ENCODE measurements at regions of chr14 and their contacts with region 1.

Region 1: DNA sequence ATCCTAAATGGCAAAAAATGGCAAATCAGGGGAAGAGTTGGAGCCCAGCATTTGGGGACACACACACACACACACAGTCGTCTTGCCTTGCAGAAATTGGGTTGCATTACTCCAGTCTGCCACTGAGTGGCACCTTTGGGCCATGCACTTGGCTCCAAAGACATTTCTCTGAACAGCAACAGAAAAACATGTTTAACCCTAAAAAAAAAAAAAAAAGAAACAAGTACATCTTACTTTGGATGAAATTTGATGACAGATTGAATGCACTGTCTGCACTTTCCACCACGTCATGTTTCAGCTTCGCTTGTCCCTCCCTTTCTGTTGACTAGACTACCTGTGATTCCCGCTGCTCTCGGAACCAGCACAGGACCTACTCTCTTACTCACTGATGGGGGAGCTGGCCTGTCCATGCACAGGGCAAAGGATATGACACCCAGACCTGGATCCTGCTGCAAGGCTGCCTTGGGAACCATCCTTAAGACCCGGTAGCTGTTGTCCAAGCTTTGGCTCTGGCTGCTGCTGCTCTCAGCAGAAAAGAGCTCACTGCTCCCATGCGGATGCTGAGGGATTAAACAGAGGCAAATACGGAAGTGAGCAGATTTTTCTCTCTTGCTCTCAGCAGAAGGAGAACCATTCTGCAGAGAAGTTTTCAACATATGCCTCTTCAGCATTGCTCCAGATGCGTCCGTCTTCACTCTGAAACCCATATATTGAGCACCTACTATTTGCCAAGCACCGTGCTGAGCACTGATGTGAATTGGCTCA is 376.8 kb downstream of the DPF3 start:
- H3K4me3 ChIP-seq: no peak overlapping the region
- H3K27ac ChIP-seq: no peak overlapping the region
- H3K4me1 ChIP-seq: no peaks in the 10 kb centered on the region
- CTCF ChIP-seq: peak; percentile 65

Region 2: DNA sequence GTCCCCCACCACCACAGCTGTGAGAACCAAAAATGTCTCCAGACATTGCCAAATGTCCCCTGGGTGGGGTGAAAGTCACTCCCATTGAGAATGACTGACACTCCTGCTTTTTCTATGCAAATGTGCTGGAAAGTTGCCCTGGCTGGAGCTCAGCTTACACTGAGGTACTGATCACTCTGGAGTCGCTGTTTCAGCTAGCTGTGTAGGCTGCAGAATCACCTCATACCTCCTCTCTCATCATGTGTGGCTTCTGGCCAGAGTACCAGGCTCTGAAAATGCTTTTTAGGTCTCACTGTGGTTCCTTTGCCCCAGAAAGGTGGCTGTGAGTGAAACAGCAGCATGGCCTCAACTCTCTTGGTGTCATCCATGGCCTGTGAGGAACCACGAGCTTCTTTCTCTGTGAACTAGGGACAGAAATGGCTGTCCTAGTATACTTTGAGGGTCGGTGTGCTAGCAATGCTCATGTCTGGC is 37.6 kb before region 1 on chr14:
- CTCF ChIA-PET with region 1: no interaction called
- POLR2A ChIA-PET with region 1: no interaction called
- H3K4me3 ChIP-seq: no peak overlapping the region
- H3K27ac ChIP-seq: no peak overlapping the region
- H3K4me1 ChIP-seq: peaks cover 5% of the 10 kb centered on the region
- CTCF ChIP-seq: no peak

Region 3: GRCh38 chr14:72503696-72504368 is 13.3 kb before region 1 on chr14:
- CTCF ChIA-PET with region 1: interaction called, 10 read pairs
- POLR2A ChIA-PET with region 1: no interaction called
- H3K4me3 ChIP-seq: no peak overlapping the region
- H3K27ac ChIP-seq: no peak overlapping the region
- H3K4me1 ChIP-seq: no peaks in the 10 kb centered on the region; the same call in 1 of the 2 replicates
- CTCF ChIP-seq: no peak

Region 4: DNA sequence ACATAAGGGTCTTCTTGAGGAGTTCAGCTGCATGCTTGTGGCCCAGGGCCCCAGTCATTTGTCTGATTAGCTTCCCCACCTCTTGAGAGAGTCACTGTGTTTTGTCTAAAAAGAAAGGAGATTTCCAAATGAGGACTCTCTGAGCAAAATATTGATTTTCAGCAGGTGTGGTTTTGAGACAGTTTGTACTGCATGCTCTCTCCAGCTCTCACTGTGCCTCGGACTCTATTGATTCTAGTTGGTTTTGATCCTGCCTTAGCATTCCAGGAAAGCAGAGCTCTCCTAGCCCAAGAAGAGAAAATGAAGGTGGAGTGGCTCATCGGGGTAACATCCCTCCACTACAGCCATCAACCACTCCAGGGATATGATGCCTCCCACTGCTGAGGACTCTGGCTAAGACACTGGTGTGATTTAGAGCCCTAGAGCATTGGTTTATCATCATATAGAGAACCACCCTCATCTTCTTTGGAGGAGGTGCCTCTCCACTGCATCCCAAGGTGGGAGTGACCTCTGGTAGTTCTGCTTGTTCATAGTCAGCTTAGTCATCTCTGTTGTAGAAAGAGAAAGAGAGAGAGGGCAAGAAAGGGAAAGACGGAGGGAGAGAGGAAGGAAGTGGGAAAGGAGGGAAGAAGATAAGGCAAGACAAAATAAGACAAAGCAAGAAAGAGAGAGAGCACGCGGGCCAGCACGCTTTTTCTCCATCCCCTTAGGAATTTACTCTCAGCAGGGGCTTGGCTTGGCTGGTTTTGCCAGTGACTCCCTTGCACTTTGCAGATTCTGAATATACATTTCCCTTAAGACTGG is 11.1 kb after region 1 on chr14:
- CTCF ChIA-PET with region 1: interaction called, 17 read pairs
- POLR2A ChIA-PET with region 1: no interaction called
- H3K4me3 ChIP-seq: no peak overlapping the region
- H3K27ac ChIP-seq: no peak overlapping the region
- H3K4me1 ChIP-seq: no peaks in the 10 kb centered on the region
- CTCF ChIP-seq: no peak

Region 5: GRCh38 chr14:72893636-72894321 is 376.7 kb after region 1 on chr14 and contains the start of gene DPF3:
- CTCF ChIA-PET with region 1: interaction called, 12 read pairs
- POLR2A ChIA-PET with region 1: interaction called, 4 read pairs
- H3K4me3 ChIP-seq: peak within 1 kb of the TSS; percentile 81
- H3K27ac ChIP-seq: peak within 1 kb of the TSS; percentile 48; the same call in 1 of the 2 replicates
- H3K4me1 ChIP-seq: 0 out of 2 replicates have a peak, but pooled peaks cover 5% of the 10 kb centered on the region
- CTCF ChIP-seq: no peak

Region 6: DNA sequence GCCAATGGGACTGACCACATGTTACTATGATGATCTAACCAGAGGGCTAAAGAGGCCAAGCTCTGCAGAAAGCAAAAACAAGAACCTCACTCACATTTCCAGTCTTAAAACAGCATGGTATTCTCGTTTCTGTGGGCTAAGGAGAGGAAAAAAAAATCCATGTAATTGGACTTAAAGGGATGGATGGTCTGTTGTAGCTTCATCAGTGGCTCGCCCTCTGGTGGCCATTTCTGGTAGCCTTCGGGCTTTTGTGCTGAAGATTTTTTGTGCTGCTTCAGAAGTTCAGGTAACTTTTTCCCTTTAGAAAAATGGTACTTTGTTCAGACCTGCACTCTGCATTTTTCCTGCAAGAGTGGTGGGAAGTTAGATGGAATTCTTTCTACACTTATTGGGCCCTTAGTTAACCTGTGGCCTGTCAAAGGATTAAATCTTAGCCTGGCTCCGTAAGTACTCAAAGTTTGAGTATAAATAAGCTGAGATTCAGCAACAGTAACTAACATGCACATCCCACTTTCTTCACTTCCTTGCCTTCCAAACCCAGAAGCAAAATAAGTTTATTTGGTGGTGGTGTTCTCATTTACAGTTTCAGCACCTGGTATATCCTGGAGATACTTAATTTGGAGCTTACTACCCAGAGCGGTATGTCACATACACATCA is 431.5 kb after region 1 on chr14:
- CTCF ChIA-PET with region 1: interaction called, 77 read pairs
- POLR2A ChIA-PET with region 1: no interaction called
- H3K4me3 ChIP-seq: no peak overlapping the region
- H3K27ac ChIP-seq: no peak overlapping the region
- H3K4me1 ChIP-seq: no peaks in the 10 kb centered on the region
- CTCF ChIP-seq: peak; percentile 27; the same call in 1 of the 2 replicates

Measured in HEK293 (cell line).